ENCODE measurements at regions of chr14 and their contacts with region 1.

Region 1: GRCh38 chr14:91872517-91873470 is 5.5 kb upstream of the TC2N start:
- DNase-seq: peak; percentile 43
- H3K4me3 Mint-ChIP-seq: peak overlapping the region; percentile 69
- H3K27ac Mint-ChIP-seq: peak overlapping the region; percentile 83
- H3K4me1 Mint-ChIP-seq: peaks cover 80% of the 10 kb centered on the region
- H3K27me3 Mint-ChIP-seq: no peaks in the 10 kb centered on the region

Region 2: DNA sequence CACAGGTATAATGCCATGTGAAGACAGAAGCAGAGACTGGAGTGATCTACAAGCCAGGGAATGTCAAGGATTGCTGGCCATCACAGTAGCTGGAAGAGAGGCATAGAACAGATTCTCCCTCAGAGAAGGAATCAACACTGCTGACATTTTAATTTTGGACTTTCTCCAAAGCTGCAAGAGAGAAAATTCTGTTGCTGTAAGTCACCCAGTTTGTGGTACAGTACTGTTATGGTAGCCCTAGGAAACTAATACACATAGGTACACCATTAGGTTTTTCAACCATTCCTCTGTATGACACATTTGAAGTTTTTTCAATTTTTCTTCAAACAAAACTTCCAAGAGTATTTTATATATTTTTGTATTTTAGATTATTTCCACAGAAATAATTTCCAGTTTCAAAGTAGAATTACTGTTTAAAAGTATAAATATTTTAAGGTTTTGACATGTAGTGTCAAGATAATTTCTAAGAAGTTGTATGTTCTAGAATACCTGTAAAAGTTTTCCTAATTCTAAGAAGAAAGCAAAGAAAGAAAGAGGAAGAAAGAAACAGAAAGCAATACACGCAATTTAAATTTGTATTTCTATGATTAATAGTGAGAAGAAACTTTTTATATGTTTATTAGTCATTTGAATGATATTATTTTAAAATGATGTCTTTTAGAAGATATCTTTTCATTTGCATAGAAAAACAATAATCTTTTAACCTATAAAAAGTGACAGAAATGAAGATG is 76.0 kb before region 1 on chr14:
- CTCF ChIA-PET with region 1: no interaction called
- POLR2A ChIA-PET with region 1: no interaction called
- intact Hi-C with region 1: loop called (anchors 5 kb)
- DNase-seq: no peak
- H3K4me3 Mint-ChIP-seq: no peak overlapping the region
- H3K27ac Mint-ChIP-seq: peak overlapping the region; percentile 74
- H3K4me1 Mint-ChIP-seq: peaks cover 34% of the 10 kb centered on the region
- H3K27me3 Mint-ChIP-seq: no peaks in the 10 kb centered on the region

Region 3: DNA sequence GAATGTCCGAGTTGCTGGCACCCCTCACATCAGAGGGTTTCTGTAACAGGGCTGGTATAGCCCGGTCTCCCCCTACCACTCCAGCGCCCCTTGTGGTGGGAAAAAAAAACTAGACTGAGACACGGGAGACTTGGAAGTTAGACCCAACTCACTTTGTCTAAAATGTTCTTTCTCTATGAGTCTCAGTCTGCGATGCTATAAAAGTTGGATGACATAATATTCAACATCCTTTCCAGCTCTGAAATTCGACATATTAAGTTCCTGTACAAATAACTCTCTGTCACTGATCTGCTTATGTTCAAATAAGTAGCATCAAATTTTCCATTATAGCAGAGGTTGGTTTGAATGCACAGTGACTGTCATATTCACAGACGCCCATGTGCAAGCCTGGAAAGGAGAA is 20.2 kb after region 1 on chr14:
- CTCF ChIA-PET with region 1: interaction called, 3 read pairs
- POLR2A ChIA-PET with region 1: interaction called, 3 read pairs
- intact Hi-C with region 1: loop called (anchors 1 kb)
- DNase-seq: peak; percentile 52
- H3K4me3 Mint-ChIP-seq: no peak overlapping the region
- H3K27ac Mint-ChIP-seq: peak overlapping the region; percentile 81
- H3K4me1 Mint-ChIP-seq: peaks cover 48% of the 10 kb centered on the region
- H3K27me3 Mint-ChIP-seq: no peaks in the 10 kb centered on the region

Region 4: GRCh38 chr14:91968280-91968679 is 95.5 kb after region 1 on chr14:
- CTCF ChIA-PET with region 1: no interaction called
- POLR2A ChIA-PET with region 1: no interaction called
- intact Hi-C with region 1: loop called (anchors 5 kb)
- DNase-seq: peak; percentile 58
- H3K4me3 Mint-ChIP-seq: no peak overlapping the region
- H3K27ac Mint-ChIP-seq: no peak overlapping the region
- H3K4me1 Mint-ChIP-seq: peaks cover 16% of the 10 kb centered on the region
- H3K27me3 Mint-ChIP-seq: no peaks in the 10 kb centered on the region